H1 (cell line): ENCODE measurements at regions of chr7 and their contacts with region 1.

Region 1: DNA sequence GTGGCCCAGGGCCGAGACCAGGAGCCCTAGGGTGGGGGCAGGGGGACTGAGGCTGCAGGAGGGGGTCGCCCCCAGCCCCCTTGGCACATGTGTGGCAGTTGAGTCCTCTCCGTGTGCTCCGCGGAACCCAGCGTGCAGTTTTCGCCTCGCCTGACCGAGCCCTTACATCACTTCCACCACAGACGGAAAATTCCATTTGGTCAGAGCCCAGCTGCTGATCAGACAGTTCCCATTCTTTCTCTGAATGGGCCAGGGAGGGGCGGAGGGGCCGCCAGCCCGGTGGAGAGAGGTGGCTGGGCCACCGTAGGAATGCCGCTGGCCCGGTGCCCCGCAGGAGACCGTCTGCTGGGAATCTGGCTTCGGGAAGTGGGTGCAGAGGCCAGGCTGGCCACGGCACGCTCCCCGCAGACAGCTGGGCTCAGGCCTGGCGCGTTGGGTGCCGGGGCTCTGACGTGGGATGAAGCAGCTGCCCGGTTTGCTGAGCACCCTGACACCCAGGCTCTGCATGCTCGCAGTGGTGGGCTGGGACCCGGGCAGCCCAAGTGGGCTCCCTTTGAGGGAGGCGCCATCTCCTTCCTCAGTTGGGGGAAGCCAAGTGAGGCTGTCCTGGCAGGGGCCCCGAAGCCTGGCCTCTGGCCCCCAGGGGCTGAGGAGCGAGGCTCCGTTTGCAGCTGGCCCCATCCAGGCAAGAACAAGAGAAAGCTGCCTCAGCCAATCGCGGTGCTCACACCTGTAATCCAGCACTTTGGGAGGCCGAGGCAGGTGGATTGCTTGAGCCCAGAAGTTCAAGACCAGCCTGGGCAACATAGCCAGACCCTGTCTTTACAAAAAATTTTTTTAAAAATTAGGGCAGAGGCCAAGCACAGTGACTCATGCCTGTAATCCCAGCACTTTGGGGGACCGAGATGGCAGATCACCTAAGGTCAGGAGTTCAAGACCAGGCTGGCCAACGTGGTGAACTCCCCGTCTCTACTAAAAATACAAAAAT is 9.9 kb downstream of the TTYH3 start:
- DNase-seq: peak in 1 of 2 experiments; percentile 87
- H3K4me3 ChIP-seq: peak overlapping the region in 2 of 4 experiments; percentile 19 to 41; a peak in 4 of 8 replicates
- H3K27ac ChIP-seq: peak overlapping the region; percentile 68; the same call in 1 of the 2 replicates
- H3K4me1 ChIP-seq: peaks cover 3 to 46% (median 39%) of the 10 kb centered on the region in 4 experiments
- H3K27me3 ChIP-seq: no peaks in the 10 kb centered on the region
- CTCF ChIP-seq: peak in 1 of 3 experiments; percentile 9; a peak in 1 of 4 replicates
- EP300 ChIP-seq: peak in 1 of 2 experiments; percentile 63; a peak in 1 of 3 replicates
- POLR2A ChIP-seq: no peak; a peak in 1 of 3 replicates
- RAD21 ChIP-seq: no peak

Region 2: DNA sequence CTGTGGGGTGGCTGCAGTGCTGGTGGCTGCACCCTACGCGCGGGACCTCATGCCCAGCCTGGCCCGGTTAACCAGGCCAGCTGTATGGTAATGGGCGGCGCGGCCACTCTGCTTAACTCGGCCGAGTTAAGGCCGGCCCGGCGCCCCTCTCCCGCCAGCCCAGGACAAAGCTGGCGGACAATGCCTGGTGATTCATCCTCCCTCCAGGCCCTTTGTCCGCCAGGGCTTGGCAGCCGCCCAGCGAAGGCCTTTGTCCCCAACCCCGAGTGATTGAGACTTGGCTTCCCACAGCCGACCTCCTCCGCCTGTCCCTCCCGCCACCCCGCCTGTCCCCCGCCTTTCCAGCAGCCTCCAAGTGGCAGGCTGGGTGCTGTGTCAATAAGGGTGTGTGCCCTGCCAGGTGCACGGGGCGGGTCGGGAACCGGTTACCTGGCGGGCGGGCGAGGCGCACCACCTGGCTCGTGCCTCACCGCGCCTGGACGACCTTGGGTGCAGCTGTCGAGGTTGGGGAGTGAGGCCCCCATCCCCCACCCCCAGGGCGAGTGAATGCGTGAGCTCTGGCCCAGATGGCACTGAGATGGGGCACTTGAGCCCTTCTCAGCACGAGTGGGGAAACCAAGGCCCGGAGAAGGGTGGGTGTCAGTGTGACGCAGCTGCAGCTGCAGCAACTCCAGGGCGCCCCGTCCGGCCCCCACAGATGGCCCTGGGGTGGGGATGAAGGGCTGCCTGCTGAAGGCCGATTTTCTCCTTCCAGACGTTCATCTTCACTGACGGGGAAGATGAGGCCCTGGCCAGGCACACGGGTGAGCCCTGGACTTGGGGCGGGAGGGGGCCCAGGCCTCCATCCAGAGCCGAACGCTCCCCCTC is 117.5 kb before region 1 on chr7:
- CTCF ChIA-PET with region 1: no interaction called
- POLR2A ChIA-PET with region 1: interaction called, 13 read pairs
- DNase-seq: peak in 1 of 2 experiments; percentile 78
- H3K4me3 ChIP-seq: peak overlapping the region in 3 of 4 experiments; percentile 23 to 73 (median 38); a peak in 5 of 8 replicates
- H3K27ac ChIP-seq: peak overlapping the region; percentile 78
- H3K4me1 ChIP-seq: peaks cover 0 to 61% (median 44%) of the 10 kb centered on the region in 4 experiments; a peak in 6 of 7 replicates
- H3K27me3 ChIP-seq: peaks cover 0 to 12% (median 3%) of the 10 kb centered on the region in 4 experiments; a peak in 5 of 7 replicates
- CTCF ChIP-seq: no peak
- EP300 ChIP-seq: no peak
- POLR2A ChIP-seq: peak in 1 of 2 experiments; percentile 32; a peak in 1 of 3 replicates
- RAD21 ChIP-seq: no peak

Region 3: GRCh38 chr7:2602406-2603043 is 39.2 kb before region 1 on chr7:
- CTCF ChIA-PET with region 1: interaction called, 16 read pairs
- POLR2A ChIA-PET with region 1: interaction called, 9 read pairs
- DNase-seq: no peak
- H3K4me3 ChIP-seq: no peak overlapping the region
- H3K27ac ChIP-seq: no peak overlapping the region
- H3K4me1 ChIP-seq: peaks cover 0 to 7% (median 1%) of the 10 kb centered on the region in 4 experiments; a peak in 3 of 7 replicates
- H3K27me3 ChIP-seq: no peaks in the 10 kb centered on the region
- CTCF ChIP-seq: no peak
- EP300 ChIP-seq: no peak
- POLR2A ChIP-seq: no peak
- RAD21 ChIP-seq: no peak; a peak in 1 of 4 replicates

Region 4: GRCh38 chr7:2608921-2609411 is 32.7 kb before region 1 on chr7:
- CTCF ChIA-PET with region 1: interaction called, 28 read pairs
- POLR2A ChIA-PET with region 1: interaction called, 9 read pairs
- DNase-seq: no peak
- H3K4me3 ChIP-seq: no peak overlapping the region
- H3K27ac ChIP-seq: no peak overlapping the region
- H3K4me1 ChIP-seq: peaks cover 0 to 17% (median 14%) of the 10 kb centered on the region in 4 experiments; a peak in 5 of 7 replicates
- H3K27me3 ChIP-seq: no peaks in the 10 kb centered on the region
- CTCF ChIP-seq: peak in 2 of 3 experiments; percentile 59 to 73; a peak in 3 of 4 replicates
- EP300 ChIP-seq: no peak
- POLR2A ChIP-seq: no peak
- RAD21 ChIP-seq: peak; percentile 50 to 66

Region 5: GRCh38 chr7:2613931-2614600 is 27.6 kb before region 1 on chr7:
- CTCF ChIA-PET with region 1: interaction called, 28 read pairs
- POLR2A ChIA-PET with region 1: interaction called, 8 read pairs
- DNase-seq: no peak
- H3K4me3 ChIP-seq: no peak overlapping the region
- H3K27ac ChIP-seq: no peak overlapping the region
- H3K4me1 ChIP-seq: peaks cover 0 to 32% (median 17%) of the 10 kb centered on the region in 4 experiments; a peak in 6 of 7 replicates
- H3K27me3 ChIP-seq: 0 out of 7 replicates have a peak, but pooled peaks cover 0 to 2% (median 0%) of the 10 kb centered on the region in 4 experiments
- CTCF ChIP-seq: no peak
- EP300 ChIP-seq: no peak
- POLR2A ChIP-seq: no peak
- RAD21 ChIP-seq: no peak

Region 6: DNA sequence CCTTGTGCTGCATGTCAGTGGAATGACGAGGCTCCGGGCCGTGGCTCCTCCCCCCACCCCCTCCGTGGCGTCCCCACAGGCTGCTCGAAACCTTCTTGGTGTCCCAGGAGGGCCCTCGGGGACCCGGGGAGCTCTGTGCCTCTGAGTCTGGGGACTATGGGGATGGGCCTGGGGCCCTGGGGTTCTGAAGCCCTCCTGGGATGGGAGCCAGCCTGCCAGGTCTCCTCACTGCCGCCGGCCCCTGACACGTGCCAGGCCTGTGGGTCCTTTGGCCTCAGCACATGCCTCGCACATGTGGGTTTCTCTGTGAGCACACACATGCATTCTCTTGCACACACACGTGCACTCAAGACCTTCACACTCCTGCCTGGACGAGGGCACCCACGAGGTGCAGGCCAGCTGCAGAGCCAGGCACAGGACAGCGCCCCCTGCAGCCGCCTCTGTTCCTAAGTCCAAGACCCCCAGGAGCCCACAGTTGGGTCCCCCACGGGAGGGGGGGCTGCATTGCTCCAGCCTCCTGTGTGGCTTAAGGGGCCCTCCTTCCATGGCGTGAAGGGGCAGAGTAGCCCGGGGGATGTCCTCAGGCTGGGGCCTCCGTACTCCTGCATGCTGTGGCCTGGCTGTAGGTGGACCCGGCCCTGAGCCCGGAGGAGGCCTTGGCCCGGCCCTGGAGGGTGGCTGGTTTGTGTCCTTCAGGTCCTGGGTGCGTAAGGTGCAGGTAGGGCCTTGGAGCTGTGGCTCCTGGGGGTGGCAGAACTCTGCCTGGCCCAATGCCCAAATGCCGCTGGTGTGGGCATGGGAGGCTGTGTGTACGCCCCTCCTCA is 19.1 kb after region 1 on chr7:
- CTCF ChIA-PET with region 1: interaction called, 29 read pairs
- POLR2A ChIA-PET with region 1: interaction called, 20 read pairs
- DNase-seq: peak in 1 of 2 experiments; percentile 71
- H3K4me3 ChIP-seq: no peak overlapping the region
- H3K27ac ChIP-seq: no peak overlapping the region
- H3K4me1 ChIP-seq: peaks cover 0 to 4% (median under 1%) of the 10 kb centered on the region in 4 experiments; a peak in 2 of 7 replicates
- H3K27me3 ChIP-seq: no peaks in the 10 kb centered on the region; a peak in 2 of 7 replicates
- CTCF ChIP-seq: peak in 2 of 3 experiments; percentile 50 to 60; a peak in 3 of 4 replicates
- EP300 ChIP-seq: no peak
- POLR2A ChIP-seq: no peak
- RAD21 ChIP-seq: peak; percentile 34 to 48; a peak in 3 of 4 replicates

Region 7: DNA sequence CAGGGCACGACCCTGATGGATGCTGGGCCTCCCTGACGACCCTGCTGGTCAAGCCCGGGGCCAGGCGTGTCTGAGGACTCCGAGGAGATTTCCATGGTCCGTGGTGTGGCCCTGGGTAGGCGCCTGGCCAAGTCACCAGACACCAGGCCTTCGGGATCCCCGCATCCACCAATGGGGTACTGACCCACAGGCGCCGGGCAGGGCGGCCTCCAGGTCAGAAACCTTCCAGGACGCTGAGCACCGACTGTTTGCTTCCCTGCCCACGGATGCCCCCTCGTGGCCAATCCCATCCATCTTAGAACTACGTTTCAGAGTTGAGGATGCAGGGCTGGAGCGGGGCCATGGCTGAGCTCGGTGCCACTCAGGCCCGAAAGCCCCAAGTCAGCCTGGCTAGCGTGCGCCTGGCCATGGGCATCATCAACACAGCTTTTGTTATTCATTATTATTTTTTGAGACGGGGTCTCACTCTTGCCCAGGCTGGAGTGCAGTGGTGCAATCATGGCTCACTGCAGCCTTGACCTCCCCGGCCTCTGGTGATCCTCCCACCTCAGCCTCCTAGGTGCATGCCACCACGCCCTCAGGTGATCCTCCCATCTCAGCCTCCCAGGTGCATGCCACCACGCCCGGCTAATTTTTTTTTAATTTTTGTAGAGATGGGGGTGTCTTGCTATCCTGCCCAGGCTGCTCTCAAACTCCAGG is 39.2 kb after region 1 on chr7:
- CTCF ChIA-PET with region 1: interaction called, 21 read pairs
- POLR2A ChIA-PET with region 1: interaction called, 3 read pairs
- DNase-seq: peak; percentile 46 to 95
- H3K4me3 ChIP-seq: no peak overlapping the region
- H3K27ac ChIP-seq: no peak overlapping the region
- H3K4me1 ChIP-seq: no peaks in the 10 kb centered on the region
- H3K27me3 ChIP-seq: no peaks in the 10 kb centered on the region; a peak in 1 of 7 replicates
- CTCF ChIP-seq: peak; percentile 85 to 89 (median 86)
- EP300 ChIP-seq: no peak
- POLR2A ChIP-seq: no peak
- RAD21 ChIP-seq: peak; percentile 84 to 88